ENCODE measurements at regions of chr3 and their contacts with region 1.

Region 1: GRCh38 chr3:24428481-24428880 is 66.2 kb downstream of the THRB start:
- DNase-seq: peak; percentile 14 to 69 (median 49)
- H3K4me3 ChIP-seq: peak overlapping the region in 1 of 7 experiments; percentile 35
- H3K27ac ChIP-seq: no peak overlapping the region
- H3K4me1 ChIP-seq: peaks cover 4 to 21% (median 12%) of the 10 kb centered on the region in 4 experiments
- H3K27me3 ChIP-seq: no peaks in the 10 kb centered on the region

Region 2: GRCh38 chr3:24323272-24323671 is 105.2 kb before region 1 on chr3:
- CTCF ChIA-PET with region 1: no interaction called
- POLR2A ChIA-PET with region 1: no interaction called
- DNase-seq: no peak
- H3K4me3 ChIP-seq: no peak overlapping the region
- H3K27ac ChIP-seq: no peak overlapping the region
- H3K4me1 ChIP-seq: no peaks in the 10 kb centered on the region
- H3K27me3 ChIP-seq: no peaks in the 10 kb centered on the region

Region 3: DNA sequence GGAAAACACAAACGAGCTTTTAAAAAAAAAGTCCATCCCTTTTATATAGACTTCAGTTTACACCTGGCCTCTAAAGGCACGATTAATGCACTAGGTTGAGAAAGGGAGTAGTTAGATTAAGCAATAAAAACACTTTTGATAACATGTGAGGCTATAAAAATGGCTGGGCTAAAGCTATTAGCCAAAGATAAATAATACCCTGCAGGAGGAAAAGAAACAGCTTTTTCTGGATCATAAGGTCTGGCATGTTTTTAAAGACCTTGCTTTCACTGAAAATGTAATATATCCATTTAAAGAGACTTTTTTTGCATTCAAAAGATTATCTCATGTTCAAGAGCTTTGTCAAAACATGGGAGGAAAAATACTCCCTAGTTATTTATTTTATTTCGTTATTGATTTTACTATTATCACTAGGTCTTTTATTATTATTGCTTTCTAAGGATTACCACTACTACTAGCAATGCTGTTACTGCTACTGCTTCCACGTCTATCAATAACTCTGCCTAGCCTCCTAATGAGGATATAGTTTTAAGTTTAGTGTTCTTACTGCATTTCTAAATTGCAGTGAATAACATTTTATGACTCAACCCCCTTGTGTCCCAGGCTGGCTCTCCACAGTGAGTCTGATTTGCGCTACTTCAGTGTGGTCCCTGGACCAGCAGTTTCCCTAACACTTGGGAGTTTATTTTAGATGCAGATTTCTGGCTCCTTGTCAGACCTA is 27.2 kb before region 1 on chr3:
- CTCF ChIA-PET with region 1: no interaction called
- POLR2A ChIA-PET with region 1: no interaction called
- DNase-seq: no peak
- H3K4me3 ChIP-seq: no peak overlapping the region
- H3K27ac ChIP-seq: no peak overlapping the region
- H3K4me1 ChIP-seq: peaks cover 0 to 2% (median 0%) of the 10 kb centered on the region in 4 experiments
- H3K27me3 ChIP-seq: no peaks in the 10 kb centered on the region

Region 4: DNA sequence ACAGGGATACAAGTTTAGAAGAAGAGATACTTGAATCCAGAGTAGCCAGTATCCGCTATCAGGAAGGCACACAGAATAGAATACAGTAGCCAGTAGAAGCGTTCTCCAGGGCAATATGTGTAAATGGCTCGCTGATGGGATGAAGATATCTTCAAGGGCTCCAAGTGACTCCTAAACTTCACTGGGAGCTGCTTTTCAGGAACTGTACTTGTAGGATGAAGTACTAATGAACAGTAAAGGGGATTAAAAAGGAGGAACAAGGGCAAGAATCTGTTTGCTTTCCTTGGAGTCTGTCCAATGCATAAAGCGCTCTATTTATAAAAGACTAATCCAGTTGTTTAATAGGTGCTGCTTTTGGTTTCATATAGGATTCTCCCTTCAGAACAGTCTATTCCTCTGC is 12.3 kb before region 1 on chr3:
- CTCF ChIA-PET with region 1: interaction called, 14 read pairs
- POLR2A ChIA-PET with region 1: no interaction called
- DNase-seq: no peak
- H3K4me3 ChIP-seq: no peak overlapping the region
- H3K27ac ChIP-seq: no peak overlapping the region
- H3K4me1 ChIP-seq: no peaks in the 10 kb centered on the region
- H3K27me3 ChIP-seq: no peaks in the 10 kb centered on the region

Region 5: GRCh38 chr3:24440760-24441464 is 12.4 kb after region 1 on chr3:
- CTCF ChIA-PET with region 1: no interaction called
- POLR2A ChIA-PET with region 1: no interaction called
- DNase-seq: no peak
- H3K4me3 ChIP-seq: no peak overlapping the region
- H3K27ac ChIP-seq: no peak overlapping the region
- H3K4me1 ChIP-seq: no peaks in the 10 kb centered on the region
- H3K27me3 ChIP-seq: no peaks in the 10 kb centered on the region

Measured in common myeloid progenitor, CD34-positive (primary cell).